PC-9 (cell line): ENCODE measurements at regions of chr6 and their contacts with region 1.

Region 1: DNA sequence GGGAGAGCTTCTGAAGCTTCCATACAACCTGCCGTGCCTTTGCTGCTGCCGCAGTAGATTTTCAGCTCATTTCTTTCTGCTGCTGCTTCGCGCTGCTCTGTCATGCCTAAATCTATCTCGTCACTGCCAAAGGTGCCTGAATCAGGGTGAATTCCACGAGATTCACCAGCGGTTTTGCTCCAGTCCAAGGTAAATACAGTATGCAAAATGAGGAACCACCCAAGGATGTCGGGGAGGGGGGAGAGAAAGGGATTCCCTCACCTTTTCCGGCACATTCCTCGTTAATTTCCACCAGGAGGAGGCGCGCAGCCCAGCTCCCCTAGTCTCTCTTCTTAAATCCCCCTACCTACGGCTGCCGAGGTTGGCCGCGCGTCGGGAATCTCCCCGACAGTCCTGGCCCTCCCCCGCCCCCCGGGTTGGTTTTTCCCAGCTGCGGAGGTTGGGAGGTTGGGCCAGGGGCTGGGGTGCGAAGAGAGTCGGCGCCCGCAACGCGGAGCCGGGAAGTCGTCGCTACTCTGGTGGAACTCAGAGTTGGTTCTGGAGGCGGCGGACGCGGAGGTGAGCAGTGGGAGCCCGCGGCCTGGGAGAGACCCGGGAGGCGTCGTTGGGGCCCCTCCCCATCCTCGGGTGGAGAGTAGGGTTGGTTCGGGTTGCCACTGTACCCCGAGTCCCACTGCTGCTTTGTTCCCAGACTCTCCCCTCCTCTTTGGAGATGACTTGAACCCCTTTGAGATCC is at the start of gene TPBG:
- DNase-seq: peak; percentile 46 to 71
- H3K4me3 ChIP-seq: peak within 1 kb of the TSS; percentile 87
- H3K27ac ChIP-seq: peak within 1 kb of the TSS; percentile 79
- H3K4me1 ChIP-seq: peaks cover 28% of the 10 kb centered on the region
- H3K27me3 ChIP-seq: no peaks in the 10 kb centered on the region
- CTCF ChIP-seq: peak; percentile 51
- total RNA-seq, gene TPBG: 42.5 and 44.6 TPM in 2 replicates

Region 2: DNA sequence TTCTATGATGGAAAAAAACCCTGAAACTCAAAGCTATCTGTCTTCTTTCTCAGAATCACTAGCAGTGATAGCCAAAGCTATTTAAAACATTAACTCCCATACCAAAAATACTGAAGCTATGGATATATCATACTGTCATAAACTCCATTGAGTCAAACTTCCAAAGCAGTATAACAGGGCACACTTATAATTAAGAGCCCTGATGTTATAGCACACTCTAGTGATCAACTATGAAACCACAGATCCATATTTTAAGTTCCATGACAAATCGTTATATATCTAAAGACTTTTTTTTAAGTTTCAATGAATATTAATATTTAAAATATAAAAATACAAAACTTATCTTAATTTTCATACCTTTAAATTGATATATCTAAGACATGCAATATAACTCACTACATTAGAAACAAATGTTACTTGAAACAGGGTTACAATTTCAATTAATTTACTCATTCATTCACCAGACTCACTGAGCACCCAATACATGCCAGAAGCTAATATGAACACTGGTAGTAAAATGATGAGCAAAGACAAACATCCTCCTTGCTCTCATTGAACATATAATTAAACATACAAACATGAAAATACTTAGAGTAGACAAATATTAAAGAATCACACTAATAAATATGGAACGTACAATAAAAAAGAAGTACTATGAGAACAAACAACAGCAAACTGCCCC is 185.3 kb before region 1 on chr6:
- CTCF ChIA-PET with region 1: no interaction called
- POLR2A ChIA-PET with region 1: no interaction called
- intact Hi-C with region 1: no loop called
- DNase-seq: no peak
- H3K4me3 ChIP-seq: no peak overlapping the region
- H3K27ac ChIP-seq: no peak overlapping the region
- H3K4me1 ChIP-seq: no peaks in the 10 kb centered on the region
- H3K27me3 ChIP-seq: no peaks in the 10 kb centered on the region
- CTCF ChIP-seq: peak; percentile 48

Region 3: GRCh38 chr6:82257088-82257772 is 106.3 kb before region 1 on chr6:
- CTCF ChIA-PET with region 1: no interaction called
- POLR2A ChIA-PET with region 1: interaction called, 46 read pairs
- intact Hi-C with region 1: no loop called
- DNase-seq: no peak
- H3K4me3 ChIP-seq: no peak overlapping the region
- H3K27ac ChIP-seq: no peak overlapping the region
- H3K4me1 ChIP-seq: peaks cover 19% of the 10 kb centered on the region
- H3K27me3 ChIP-seq: no peaks in the 10 kb centered on the region
- CTCF ChIP-seq: no peak; the same call in 1 of the 2 replicates

Region 4: GRCh38 chr6:82396964-82397751 is 33.6 kb after region 1 on chr6:
- CTCF ChIA-PET with region 1: no interaction called
- POLR2A ChIA-PET with region 1: no interaction called
- intact Hi-C with region 1: loop called (anchors 5 kb)
- DNase-seq: peak; percentile 54 to 93
- H3K4me3 ChIP-seq: peak overlapping the region; percentile 35; the same call in 1 of the 2 replicates
- H3K27ac ChIP-seq: peak overlapping the region; percentile 98
- H3K4me1 ChIP-seq: peaks cover 37% of the 10 kb centered on the region
- H3K27me3 ChIP-seq: no peaks in the 10 kb centered on the region
- CTCF ChIP-seq: no peak

Region 5: GRCh38 chr6:82467338-82467737 is 103.8 kb after region 1 on chr6:
- CTCF ChIA-PET with region 1: no interaction called
- POLR2A ChIA-PET with region 1: no interaction called
- intact Hi-C with region 1: no loop called
- DNase-seq: no peak
- H3K4me3 ChIP-seq: no peak overlapping the region
- H3K27ac ChIP-seq: no peak overlapping the region
- H3K4me1 ChIP-seq: no peaks in the 10 kb centered on the region
- H3K27me3 ChIP-seq: no peaks in the 10 kb centered on the region
- CTCF ChIP-seq: no peak

Region 6: DNA sequence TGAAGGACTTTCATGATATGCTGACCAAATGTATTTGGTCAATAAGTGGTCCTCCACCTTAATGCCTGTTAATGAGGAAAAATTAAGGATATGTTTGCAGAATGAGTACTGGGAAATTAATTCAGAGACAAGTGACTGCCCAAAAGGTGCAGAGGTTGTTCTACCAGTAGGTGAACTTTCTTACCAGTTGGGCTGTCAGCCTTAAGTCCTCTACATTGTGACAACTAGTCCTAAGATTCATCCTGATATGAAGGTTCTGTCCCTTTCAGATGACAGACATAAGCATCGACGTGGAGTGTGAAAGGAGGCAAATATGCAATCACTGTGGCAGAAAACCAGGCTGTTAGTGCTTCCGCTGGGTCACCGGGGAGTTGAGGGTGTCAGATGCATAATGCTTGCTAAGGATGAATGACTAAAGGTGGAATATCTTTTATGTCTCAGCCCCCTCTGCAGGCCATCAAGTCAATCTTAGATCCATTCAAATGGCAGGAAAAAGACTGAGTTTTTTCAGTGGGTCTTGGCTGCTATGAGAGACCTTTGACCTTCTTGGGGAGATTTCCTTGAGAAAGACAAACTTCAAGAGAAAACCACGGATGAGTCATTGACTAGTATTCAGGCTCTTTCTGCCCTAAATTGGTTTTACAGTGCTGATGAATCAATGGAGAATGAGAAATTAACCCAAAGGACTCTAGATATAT is 226.1 kb after region 1 on chr6:
- CTCF ChIA-PET with region 1: no interaction called
- POLR2A ChIA-PET with region 1: no interaction called
- intact Hi-C with region 1: loop called (anchors 2 kb)
- DNase-seq: peak; percentile 6 to 62
- H3K4me3 ChIP-seq: no peak overlapping the region
- H3K27ac ChIP-seq: no peak overlapping the region
- H3K4me1 ChIP-seq: peaks cover 18% of the 10 kb centered on the region; the same call in 1 of the 2 replicates
- H3K27me3 ChIP-seq: no peaks in the 10 kb centered on the region
- CTCF ChIP-seq: peak; percentile 42; the same call in 1 of the 2 replicates

Region 7: DNA sequence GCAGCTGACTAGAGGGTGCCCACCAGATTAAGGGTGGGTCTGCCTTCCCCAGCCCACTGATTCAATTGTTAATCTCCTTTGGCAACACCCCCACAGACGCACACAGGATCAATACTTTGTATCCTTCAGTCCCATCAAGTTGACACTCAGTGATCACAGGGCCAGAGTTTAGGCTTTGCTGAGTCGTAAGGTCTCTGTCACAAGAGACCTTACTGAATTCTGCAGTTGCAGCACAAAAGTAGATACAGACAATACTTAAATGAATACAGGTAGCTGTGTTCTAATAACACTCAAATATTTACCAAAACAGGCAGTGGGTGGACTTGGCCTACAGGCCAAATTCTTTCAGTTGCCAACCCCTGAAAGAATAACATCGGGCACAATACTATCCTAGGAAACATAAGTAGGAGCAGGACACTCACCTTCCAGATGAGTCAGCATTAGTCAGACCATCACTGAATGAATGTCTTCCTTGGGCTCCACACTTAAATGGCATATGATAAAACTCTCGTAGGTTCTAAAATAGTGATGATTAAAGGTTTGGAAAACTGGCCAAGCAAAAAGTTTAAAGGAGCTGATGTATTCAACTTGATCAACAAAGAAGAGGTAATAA is 512.2 kb after region 1 on chr6:
- CTCF ChIA-PET with region 1: no interaction called
- POLR2A ChIA-PET with region 1: interaction called, 13 read pairs
- intact Hi-C with region 1: no loop called
- DNase-seq: peak; percentile 56 to 84
- H3K4me3 ChIP-seq: no peak overlapping the region
- H3K27ac ChIP-seq: peak overlapping the region; percentile 43
- H3K4me1 ChIP-seq: peaks cover 23% of the 10 kb centered on the region
- H3K27me3 ChIP-seq: no peaks in the 10 kb centered on the region
- CTCF ChIP-seq: no peak